Mammary epithelial cell (primary cell): ENCODE measurements at regions of chr16 and their contacts with region 1.

Region 1: DNA sequence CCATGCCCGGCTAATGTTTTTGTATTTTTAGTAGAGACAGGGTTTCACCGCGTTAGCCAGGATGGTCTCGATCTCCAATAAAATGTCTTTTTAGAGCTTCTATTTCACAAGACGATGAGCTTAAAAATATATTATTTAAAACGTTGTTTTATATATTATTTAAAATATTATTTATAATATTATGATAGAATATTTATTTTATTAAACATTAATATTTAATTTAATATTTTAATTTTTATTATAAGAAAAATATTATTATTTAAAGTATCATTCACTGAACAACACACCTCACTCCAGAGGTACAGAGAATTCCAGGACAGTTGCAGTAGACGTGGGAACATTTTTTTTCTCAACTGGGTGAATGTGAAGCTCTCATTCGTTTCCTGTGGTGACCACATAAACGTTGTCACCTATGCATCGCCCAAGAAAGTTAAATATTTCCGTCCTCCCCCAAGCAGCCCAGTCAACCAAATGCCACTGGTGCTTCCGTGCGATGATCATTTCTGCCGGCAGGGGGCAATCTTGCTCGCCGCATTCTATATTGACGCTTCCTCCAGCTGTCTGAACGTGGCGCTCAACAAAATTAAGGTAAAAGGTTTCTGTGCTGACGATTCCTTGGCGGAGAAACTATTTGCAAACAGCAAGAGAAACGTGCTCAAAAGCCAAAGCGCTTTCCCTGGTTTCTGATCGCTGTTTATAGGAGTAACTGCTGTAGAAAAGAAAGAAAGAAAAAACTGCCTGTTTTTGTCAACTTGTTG is 41.7 kb upstream of the PRSS54 start:
- DNase-seq: peak; percentile 62
- H3K4me3 ChIP-seq: no peak overlapping the region
- H3K27ac ChIP-seq: no peak overlapping the region
- H3K4me1 ChIP-seq: no peaks in the 10 kb centered on the region
- H3K27me3 ChIP-seq: no peaks in the 10 kb centered on the region
- CTCF ChIP-seq: peak; percentile 87 to 93

Region 2: DNA sequence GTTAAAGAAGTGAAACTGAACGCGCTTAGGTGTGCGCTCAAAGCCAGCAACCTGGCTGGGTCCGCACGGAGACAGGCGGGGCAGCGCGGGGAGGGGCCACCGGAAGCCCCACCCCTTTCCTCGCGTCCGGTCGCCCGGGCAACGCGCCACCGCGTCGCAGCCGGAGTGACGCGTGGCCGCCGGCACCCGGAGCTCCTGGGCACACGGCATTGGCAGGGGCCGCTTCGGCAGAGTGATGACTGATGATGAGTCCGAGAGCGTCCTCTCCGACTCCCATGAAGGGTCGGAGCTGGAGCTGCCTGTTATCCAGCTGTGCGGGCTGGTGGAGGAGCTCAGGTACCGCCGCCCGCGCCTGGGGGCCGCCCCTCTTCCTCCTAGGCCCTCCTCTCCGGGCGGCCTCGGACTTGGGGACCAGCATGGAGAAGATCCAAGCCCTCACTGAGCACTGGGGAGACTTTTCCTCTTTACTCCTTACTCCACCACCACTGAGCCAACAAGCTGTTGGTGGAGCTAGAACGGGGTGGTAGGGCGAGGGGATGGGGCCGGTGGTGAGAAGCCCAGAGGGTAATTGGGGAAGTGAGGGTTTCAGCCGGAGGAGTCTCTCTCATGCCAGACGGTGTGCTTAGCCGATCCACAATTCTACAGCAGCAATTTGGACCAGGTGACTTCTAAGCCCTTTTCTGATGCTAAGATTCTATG is 86.6 kb before region 1 on chr16:
- CTCF ChIA-PET with region 1: interaction called, 23 read pairs
- dilution Hi-C with region 1: no loop called
- in situ Hi-C with region 1: no loop called
- intact Hi-C with region 1: no loop called
- DNase-seq: peak; percentile 86
- H3K4me3 ChIP-seq: peak overlapping the region; percentile 72 to 95 (median 74)
- H3K27ac ChIP-seq: peak overlapping the region; percentile 73
- H3K4me1 ChIP-seq: peaks cover 5% of the 10 kb centered on the region
- H3K27me3 ChIP-seq: no peaks in the 10 kb centered on the region
- CTCF ChIP-seq: no peak

Region 3: GRCh38 chr16:58430718-58431117 is 94.2 kb after region 1 on chr16:
- CTCF ChIA-PET with region 1: no interaction called
- dilution Hi-C with region 1: no loop called
- in situ Hi-C with region 1: no loop called
- intact Hi-C with region 1: no loop called
- DNase-seq: no peak
- H3K4me3 ChIP-seq: no peak overlapping the region
- H3K27ac ChIP-seq: no peak overlapping the region
- H3K4me1 ChIP-seq: peaks cover 12% of the 10 kb centered on the region
- H3K27me3 ChIP-seq: peaks cover 2% of the 10 kb centered on the region
- CTCF ChIP-seq: no peak

Region 4: GRCh38 chr16:58494981-58495520 is 158.5 kb after region 1 on chr16:
- CTCF ChIA-PET with region 1: interaction called, 3 read pairs
- dilution Hi-C with region 1: no loop called
- in situ Hi-C with region 1: loop called (anchors 5 kb)
- intact Hi-C with region 1: no loop called
- DNase-seq: peak; percentile 96
- H3K4me3 ChIP-seq: no peak overlapping the region
- H3K27ac ChIP-seq: no peak overlapping the region
- H3K4me1 ChIP-seq: no peaks in the 10 kb centered on the region
- H3K27me3 ChIP-seq: no peaks in the 10 kb centered on the region
- CTCF ChIP-seq: peak; percentile 42 to 52

Region 5: GRCh38 chr16:58629572-58630104 is 293.1 kb after region 1 on chr16 and contains the start of gene CNOT1:
- CTCF ChIA-PET with region 1: no interaction called
- dilution Hi-C with region 1: no loop called
- in situ Hi-C with region 1: no loop called
- intact Hi-C with region 1: loop called (anchors 10 kb)
- DNase-seq: peak; percentile 100
- H3K4me3 ChIP-seq: peak within 1 kb of the TSS; percentile 81 to 98 (median 94)
- H3K27ac ChIP-seq: peak within 1 kb of the TSS; percentile 95
- H3K4me1 ChIP-seq: peaks cover 3% of the 10 kb centered on the region
- H3K27me3 ChIP-seq: no peaks in the 10 kb centered on the region
- CTCF ChIP-seq: no peak
- total RNA-seq, gene CNOT1: 159 to 191 TPM

Region 6: GRCh38 chr16:58755989-58756649 is 419.6 kb after region 1 on chr16:
- CTCF ChIA-PET with region 1: no interaction called
- dilution Hi-C with region 1: no loop called
- in situ Hi-C with region 1: loop called in 1 of 2 experiments (anchors 25 kb)
- intact Hi-C with region 1: no loop called
- DNase-seq: peak; percentile 58
- H3K4me3 ChIP-seq: no peak overlapping the region
- H3K27ac ChIP-seq: no peak overlapping the region
- H3K4me1 ChIP-seq: no peaks in the 10 kb centered on the region
- H3K27me3 ChIP-seq: no peaks in the 10 kb centered on the region
- CTCF ChIP-seq: peak; percentile 70 to 91